Heart right ventricle (tissue), 16 donors: ENCODE measurements at regions of chr14 and their contacts with region 1.

Region 1: GRCh38 chr14:31895206-31895605 is 181.9 kb upstream of the ARHGAP5 start:
- DNase-seq: no peak
- ATAC-seq: no peak
- H3K4me3 ChIP-seq: no peak overlapping the region
- H3K27ac ChIP-seq: peak overlapping the region in 2 of 10 donors; percentile 7 to 13
- H3K4me1 ChIP-seq: peaks cover 9 to 31% (median 18%) of the 10 kb centered on the region in 9 donors
- H3K27me3 ChIP-seq: no peaks in the 10 kb centered on the region
- CTCF ChIP-seq: no peak

Region 2: GRCh38 chr14:31543969-31544799 is 351.0 kb before region 1 on chr14:
- intact Hi-C with region 1: loop called in 1 of 10 experiments (anchors 10 kb)
- DNase-seq: no peak
- ATAC-seq: peak in 1 of 8 donors; percentile 48
- H3K4me3 ChIP-seq: no peak overlapping the region
- H3K27ac ChIP-seq: no peak overlapping the region
- H3K4me1 ChIP-seq: no peaks in the 10 kb centered on the region
- H3K27me3 ChIP-seq: no peaks in the 10 kb centered on the region
- CTCF ChIP-seq: peak in 7 of 9 donors; percentile 16 to 46 (median 34)